ENCODE measurements at regions of chr11 and their contacts with region 1.

Region 1: DNA sequence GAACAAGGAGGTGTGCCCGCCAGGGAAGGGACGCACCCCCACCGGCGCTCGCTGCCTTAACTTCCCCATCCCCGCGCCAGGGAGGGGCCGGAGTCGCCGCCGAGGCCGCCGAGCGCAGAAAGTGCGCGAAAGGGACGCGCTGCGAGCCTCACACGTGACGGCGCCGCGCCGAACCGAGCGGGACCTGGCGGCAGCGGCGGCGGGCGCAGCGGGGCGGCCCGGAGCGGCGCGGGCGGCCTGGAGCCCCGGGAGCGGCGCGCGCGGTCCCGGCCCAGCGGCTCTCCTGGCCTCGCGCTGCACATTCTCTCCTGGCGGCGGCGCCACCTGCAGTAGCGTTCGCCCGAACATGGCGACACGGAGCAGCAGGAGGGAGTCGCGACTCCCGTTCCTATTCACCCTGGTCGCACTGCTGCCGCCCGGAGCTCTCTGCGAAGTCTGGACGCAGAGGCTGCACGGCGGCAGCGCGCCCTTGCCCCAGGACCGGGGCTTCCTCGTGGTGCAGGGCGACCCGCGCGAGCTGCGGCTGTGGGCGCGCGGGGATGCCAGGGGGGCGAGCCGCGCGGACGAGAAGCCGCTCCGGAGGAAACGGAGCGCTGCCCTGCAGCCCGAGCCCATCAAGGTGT is at the start of gene SORL1:
- DNase-seq: peak; percentile 90
- ATAC-seq: peak; percentile 90
- total RNA-seq, gene SORL1: 6.1 TPM

Region 2: GRCh38 chr11:121318848-121319834 is 133.0 kb before region 1 on chr11:
- intact Hi-C with region 1: loop called (anchors 1 kb)
- DNase-seq: no peak
- ATAC-seq: peak; percentile 71

Region 3: GRCh38 chr11:121341609-121342008 is 110.5 kb before region 1 on chr11:
- intact Hi-C with region 1: no loop called
- DNase-seq: no peak
- ATAC-seq: no peak

Region 4: DNA sequence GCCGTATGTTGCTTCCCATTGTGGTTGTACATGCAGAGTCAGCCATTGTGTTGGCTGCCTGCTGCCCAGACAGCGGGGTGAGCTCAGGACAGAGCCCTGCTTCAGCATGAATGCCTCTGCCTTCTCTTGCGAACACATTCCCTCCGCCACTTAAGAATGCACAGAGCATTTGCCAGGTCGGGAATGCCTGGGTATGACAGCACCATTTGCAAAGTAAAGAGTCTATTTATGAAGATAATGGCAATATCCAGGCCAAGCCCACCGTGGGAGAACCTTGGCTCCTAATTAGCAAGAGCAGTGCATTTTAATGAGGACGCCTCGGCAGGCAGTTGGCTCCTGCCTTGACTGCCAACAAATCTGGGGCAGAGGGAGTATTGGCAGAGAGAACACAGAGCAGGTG is 62.4 kb before region 1 on chr11:
- intact Hi-C with region 1: loop called (anchors 2 kb)
- DNase-seq: no peak
- ATAC-seq: peak; percentile 94

Region 5: DNA sequence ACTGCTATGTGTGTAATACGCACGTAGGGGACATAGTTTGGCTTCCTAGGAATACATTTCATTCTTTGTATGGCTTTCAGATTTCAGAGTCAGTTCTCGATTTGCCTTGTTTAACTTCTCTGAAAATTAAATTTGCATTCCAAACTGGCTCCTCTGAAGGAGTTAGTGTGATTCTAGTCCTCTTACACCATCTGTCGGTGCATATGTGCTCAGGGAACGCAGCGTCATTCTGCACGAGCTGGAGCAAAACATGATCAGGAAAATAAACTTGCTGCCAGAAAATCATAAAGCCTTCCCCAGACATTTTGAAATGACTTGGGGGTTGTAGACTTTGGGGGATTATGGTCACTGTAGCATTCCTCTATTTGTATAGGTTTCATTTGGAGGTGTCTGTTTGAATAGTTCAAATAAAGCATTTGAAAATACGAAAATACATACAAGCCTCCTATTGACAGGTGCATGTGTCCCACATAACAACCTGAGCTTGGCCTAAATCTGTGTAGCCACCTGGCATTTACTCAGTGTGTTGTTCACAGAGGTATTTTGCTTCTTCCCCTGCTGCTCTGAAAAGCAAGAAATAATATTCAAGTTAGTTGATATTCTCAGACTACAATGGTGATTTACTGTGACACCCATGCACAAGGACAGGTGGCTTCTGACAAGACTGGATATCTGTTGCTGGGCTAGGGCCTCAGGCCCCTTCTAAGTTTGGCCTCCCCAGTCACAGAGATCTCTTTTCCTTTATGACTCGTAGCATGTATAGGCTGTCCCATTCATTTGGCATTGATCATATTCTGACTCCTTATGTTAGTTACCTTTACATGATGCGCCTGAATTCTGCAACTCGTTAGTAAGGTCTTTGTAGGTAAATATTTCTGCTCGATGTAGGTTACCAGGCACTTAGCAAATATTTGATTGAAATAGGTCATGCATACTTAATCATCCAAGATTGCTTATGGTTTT is 82.3 kb after region 1 on chr11:
- intact Hi-C with region 1: loop called (anchors 2 kb)
- DNase-seq: no peak
- ATAC-seq: peak; percentile 59

Measured in Right ventricle myocardium inferior (tissue), 1 donor.